GM10248 (cell line): ENCODE measurements at regions of chr9 and their contacts with region 1.

Region 1: GRCh38 chr9:7570107-7570720 is 229.4 kb downstream of the DMAC1 start:
- DNase-seq: peak; percentile 19
- CTCF ChIP-seq: peak; percentile 88

Region 2: DNA sequence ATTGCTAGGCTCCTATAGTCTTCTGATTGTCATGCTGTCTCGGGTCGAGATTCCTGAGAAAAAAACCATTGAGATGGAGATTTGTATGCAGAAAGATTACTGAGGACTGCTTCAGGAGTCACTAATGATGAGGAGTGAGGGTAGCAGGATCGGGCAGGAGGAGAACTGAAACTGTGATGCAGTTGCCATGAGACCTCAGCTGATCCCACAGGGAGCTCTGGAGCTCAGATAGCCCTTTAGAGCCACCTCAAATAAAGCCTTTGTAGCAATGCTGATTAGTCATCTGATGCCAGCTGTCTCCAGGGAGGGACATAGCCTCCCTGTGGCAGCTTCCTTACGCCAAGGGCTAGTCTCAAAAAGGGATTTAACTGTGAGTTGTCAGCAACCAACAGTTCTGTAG is 27.5 kb before region 1 on chr9:
- CTCF ChIA-PET with region 1: interaction called, 10 read pairs
- POLR2A ChIA-PET with region 1: no interaction called
- DNase-seq: no peak
- CTCF ChIP-seq: no peak

Region 3: GRCh38 chr9:8895861-8896224 is 1325.6 kb after region 1 on chr9:
- CTCF ChIA-PET with region 1: interaction called, 23 read pairs
- POLR2A ChIA-PET with region 1: no interaction called
- DNase-seq: peak; percentile 8
- CTCF ChIP-seq: peak; percentile 24